OCI-LY7 (cell line): ENCODE measurements at regions of chr2 and their contacts with region 1.

Region 1: DNA sequence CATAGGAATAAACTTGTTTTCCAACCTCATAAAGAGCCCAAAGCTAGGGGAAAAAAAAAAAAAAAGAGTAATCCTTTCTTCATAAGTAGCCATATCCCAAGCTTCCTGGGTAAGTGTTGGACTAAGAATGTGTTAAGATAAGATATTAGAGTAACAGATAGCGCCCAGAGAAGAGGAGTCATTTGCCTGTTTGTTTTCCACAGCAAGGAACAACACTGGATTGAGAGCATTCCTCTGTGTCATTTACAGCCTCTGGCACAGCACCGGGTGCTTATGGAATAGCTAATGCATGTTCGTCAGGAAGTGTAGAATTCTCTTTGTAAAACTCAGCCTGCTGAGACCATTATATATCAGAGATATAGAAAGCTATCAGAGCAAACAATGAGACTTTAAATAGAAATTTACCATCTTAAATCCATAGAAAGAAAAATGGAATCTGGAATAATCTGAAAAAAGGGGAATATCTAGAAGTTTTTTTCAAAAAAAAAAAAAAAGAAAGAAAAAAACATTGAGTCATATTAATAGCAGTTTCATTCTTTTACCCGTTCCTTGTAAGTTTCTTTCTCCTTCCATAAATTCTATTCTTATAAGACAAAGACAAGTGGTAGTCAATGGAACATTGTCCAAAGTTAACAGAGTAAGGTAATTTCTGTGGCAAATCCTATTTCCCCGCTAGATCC is 37.6 kb downstream of the LRP2 start:
- DNase-seq: no peak
- H3K4me3 ChIP-seq: no peak overlapping the region
- H3K27ac ChIP-seq: no peak overlapping the region
- H3K4me1 ChIP-seq: no peaks in the 10 kb centered on the region
- CTCF ChIP-seq: no peak

Region 2: GRCh38 chr2:168660870-168661862 is 663.6 kb before region 1 on chr2:
- CTCF ChIA-PET with region 1: no interaction called
- POLR2A ChIA-PET with region 1: no interaction called
- intact Hi-C with region 1: no loop called
- DNase-seq: no peak
- H3K4me3 ChIP-seq: no peak overlapping the region
- H3K27ac ChIP-seq: no peak overlapping the region
- H3K4me1 ChIP-seq: no peaks in the 10 kb centered on the region
- CTCF ChIP-seq: no peak

Region 3: DNA sequence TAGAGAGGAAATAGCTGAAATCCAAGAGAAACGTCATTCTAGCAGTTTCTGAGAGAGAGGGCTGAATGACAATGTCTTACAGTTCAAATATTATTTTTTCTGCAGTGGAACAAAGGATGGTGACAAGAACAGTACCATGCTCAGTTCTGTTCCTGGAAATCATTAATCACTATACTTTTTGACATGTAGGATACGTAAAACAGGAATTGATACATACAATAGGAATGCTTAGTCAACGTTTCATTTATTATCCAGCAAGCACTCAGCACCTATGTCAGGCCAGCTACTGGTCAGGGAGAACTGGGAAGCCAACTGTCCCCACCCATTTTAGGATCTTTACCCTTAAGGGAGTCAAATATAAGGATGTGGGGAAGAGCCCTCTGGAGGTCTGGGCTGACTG is 140.6 kb before region 1 on chr2:
- CTCF ChIA-PET with region 1: no interaction called
- POLR2A ChIA-PET with region 1: no interaction called
- intact Hi-C with region 1: no loop called
- DNase-seq: no peak
- H3K4me3 ChIP-seq: no peak overlapping the region
- H3K27ac ChIP-seq: no peak overlapping the region
- H3K4me1 ChIP-seq: no peaks in the 10 kb centered on the region
- CTCF ChIP-seq: no peak

Region 4: GRCh38 chr2:169285531-169286235 is 39.0 kb before region 1 on chr2:
- CTCF ChIA-PET with region 1: no interaction called
- POLR2A ChIA-PET with region 1: no interaction called
- intact Hi-C with region 1: no loop called
- DNase-seq: no peak
- H3K4me3 ChIP-seq: no peak overlapping the region
- H3K27ac ChIP-seq: no peak overlapping the region
- H3K4me1 ChIP-seq: no peaks in the 10 kb centered on the region
- CTCF ChIP-seq: no peak

Region 5: DNA sequence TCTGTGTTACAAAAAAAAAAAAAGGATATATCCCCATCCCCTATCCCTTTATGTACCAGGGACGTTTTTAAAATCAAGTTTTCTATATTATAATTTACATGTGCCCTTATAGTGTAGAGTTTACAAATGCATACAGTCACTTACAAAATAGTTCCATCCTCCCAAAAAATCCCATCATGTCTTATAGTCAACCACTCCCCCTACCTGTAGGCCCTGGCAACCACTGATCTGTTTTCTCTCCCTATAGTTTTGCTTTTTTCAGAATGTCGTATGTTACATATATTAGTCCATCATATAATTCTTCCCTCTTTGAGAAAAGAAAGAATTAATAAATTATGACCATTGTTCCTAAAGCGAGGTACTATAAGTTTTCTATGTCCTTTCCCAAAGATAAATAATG is 351.6 kb after region 1 on chr2:
- CTCF ChIA-PET with region 1: no interaction called
- POLR2A ChIA-PET with region 1: interaction called, 10 read pairs
- intact Hi-C with region 1: no loop called
- DNase-seq: peak; percentile 17
- H3K4me3 ChIP-seq: no peak overlapping the region
- H3K27ac ChIP-seq: no peak overlapping the region
- H3K4me1 ChIP-seq: no peaks in the 10 kb centered on the region
- CTCF ChIP-seq: peak; percentile 75

Region 6: DNA sequence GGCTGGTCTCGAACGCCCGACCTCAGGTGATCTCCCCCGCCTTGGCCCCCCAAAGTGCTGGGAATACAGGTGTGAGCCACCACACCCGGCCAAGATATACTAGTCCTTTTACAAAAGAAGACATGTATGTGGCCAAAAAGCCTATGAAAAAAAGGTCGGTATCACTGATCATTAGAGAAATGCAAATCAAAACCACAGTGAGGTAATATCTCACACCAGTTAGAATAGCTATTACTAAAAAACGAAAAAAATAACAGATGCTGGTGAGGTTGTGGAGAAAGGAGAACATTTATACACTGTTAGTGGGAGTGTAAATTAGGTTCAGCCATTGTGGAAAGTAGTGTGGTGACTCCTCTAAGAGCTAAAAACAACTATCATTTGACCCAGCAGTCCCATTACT is 435.3 kb after region 1 on chr2:
- CTCF ChIA-PET with region 1: no interaction called
- POLR2A ChIA-PET with region 1: interaction called, 12 read pairs
- intact Hi-C with region 1: no loop called
- DNase-seq: no peak
- H3K4me3 ChIP-seq: no peak overlapping the region
- H3K27ac ChIP-seq: no peak overlapping the region
- H3K4me1 ChIP-seq: no peaks in the 10 kb centered on the region
- CTCF ChIP-seq: no peak